Posterior vena cava (tissue), 2 donors: ENCODE measurements at regions of chr3 and their contacts with region 1.

Region 1: DNA sequence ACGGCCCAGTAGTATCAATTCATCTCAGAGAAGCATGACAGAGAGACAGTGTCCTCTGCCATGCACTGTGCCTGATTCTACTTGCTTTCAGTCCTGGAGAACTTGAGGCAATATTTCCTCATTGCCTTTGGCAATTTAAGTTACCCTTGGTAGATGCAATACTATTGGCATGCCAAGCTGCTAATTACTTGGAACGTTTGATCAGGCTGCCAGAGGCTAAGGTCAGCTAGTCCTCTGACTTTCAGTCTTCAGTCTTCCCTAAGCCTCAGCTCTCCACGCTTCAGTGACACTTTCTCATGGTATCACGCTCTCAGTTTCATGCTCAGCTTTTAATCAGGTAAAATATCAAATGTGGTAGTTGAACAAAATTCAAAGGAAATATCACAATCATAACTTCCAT is 13.1 kb upstream of the OSBPL11 start:
- DNase-seq: no peak

Region 2: GRCh38 chr3:126314790-126315658 is 706.6 kb after region 1 on chr3:
- intact Hi-C with region 1: loop called in 1 of 2 experiments (anchors 5 kb)
- DNase-seq: peak; percentile 67